ENCODE measurements at regions of chr6 and their contacts with region 1.

Region 1: DNA sequence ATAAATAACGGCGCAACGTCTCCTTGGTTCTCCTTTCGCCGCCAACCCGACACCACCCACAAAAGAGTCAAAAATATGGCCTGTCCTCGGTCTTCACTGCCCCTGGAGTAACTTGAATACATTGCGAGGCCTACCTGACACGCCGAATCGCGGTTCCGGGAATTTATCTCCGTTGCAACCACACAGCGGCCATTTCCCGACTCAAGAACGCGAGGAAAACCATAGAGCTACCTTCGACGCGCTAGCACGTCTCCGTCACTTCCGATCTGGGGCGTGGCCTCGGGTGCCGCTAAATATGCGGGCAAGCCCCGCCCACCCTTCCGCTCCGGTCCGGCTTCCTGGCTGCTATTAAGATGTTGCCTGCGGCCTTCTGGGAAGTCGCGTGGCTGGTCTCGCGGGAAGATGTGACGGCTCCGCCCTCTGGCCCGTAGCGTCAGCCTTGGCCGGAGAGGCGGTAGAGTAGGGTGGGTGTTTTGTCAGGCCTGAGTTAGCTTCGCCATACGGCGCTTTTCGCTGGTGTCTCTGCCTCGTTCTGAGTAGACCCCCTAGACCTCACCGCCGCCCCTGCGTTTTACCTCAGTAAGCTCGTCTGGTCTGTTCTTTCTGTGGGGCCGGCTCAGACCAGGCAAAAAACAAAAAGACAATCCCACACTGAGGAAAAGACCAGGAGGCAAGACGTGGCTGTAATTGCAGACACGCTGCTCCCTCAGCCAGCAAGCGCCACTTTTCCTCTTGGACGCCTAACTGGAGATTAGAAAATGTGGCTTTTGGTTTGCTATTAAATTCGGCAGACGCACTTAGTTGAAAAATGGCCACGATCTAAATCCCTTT is at the start of gene BCLAF1:
- DNase-seq: peak; percentile 99 to 100 (median 100)
- H3K4me3 ChIP-seq: peak within 1 kb of the TSS; percentile 92 to 94
- H3K4me3 Mint-ChIP-seq: peak within 1 kb of the TSS; percentile 93 to 100 (median 100)
- H3K27ac ChIP-seq: peak within 1 kb of the TSS; percentile 100
- H3K27ac Mint-ChIP-seq: peak within 1 kb of the TSS; percentile 99 to 100 (median 100)
- H3K4me1 ChIP-seq: peaks cover 56% of the 10 kb centered on the region
- H3K4me1 Mint-ChIP-seq: peaks cover 22 to 72% (median 47%) of the 10 kb centered on the region in 4 donors
- H3K27me3 ChIP-seq: no peaks in the 10 kb centered on the region
- H3K27me3 Mint-ChIP-seq: peaks cover 5% of the 10 kb centered on the region in 2 donors
- total RNA-seq, gene BCLAF1: 233 to 242 TPM

Region 2: DNA sequence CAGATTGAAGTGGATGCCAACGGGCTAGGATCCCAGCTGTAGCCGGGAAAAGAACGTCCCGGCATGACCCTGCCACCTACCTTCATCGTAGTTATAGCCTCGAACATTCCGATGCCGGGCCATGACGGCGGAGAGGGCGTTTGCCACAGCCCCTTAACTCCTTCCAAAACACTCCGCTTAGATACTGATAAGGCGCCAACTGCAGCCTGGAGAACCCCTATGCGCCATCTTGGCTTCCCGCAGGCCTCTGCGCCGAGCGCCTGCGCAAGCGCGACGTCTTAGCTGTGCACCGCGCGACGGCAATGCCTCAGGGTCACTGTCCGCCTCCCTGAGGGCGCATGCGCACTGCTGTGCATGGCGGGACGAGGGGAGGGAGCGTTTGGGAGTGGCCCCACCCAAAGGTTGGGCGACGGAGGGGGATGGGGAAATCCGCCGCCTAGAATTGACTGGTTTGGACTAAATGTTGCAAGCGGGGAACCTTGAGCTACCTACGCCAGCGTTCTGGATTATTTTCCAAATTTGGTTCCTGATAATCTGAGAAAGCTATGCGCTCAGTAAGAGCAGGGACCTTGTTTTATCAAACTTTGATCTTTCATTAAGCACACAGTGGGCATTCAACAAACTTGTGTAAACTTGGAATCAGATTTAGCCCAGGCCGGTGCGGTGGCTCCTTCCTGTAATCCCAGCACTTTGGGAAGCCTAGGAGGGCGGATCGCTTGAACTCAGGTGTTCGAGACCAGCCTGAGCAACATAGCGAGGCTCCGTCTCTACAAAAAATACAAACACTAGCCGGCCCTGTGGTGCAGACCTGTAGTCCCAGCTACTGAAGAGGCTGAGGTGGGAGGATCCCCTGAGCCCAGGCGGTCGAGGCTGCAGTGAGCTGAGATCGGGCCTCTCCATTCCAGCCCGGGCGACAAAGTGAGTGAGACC is 1235.0 kb before region 1 on chr6 and contains the start of gene HBS1L:
- CTCF ChIA-PET with region 1: interaction called, 4 read pairs
- POLR2A ChIA-PET with region 1: interaction called, 17 read pairs
- intact Hi-C with region 1: no loop called
- DNase-seq: peak; percentile 95 to 97 (median 96)
- H3K4me3 ChIP-seq: peak within 1 kb of the TSS; percentile 54 to 91
- H3K4me3 Mint-ChIP-seq: peak within 1 kb of the TSS; percentile 93 to 99 (median 97)
- H3K27ac ChIP-seq: peak within 1 kb of the TSS; percentile 91
- H3K27ac Mint-ChIP-seq: peak within 1 kb of the TSS; percentile 96 to 99 (median 99)
- H3K4me1 ChIP-seq: peaks cover 37% of the 10 kb centered on the region
- H3K4me1 Mint-ChIP-seq: peaks cover 27 to 44% (median 37%) of the 10 kb centered on the region in 4 donors
- H3K27me3 ChIP-seq: no peaks in the 10 kb centered on the region
- H3K27me3 Mint-ChIP-seq: no peaks in the 10 kb centered on the region
- total RNA-seq, gene HBS1L: 63.8 to 69.9 TPM

Region 3: GRCh38 chr6:135880066-135880972 is 409.5 kb before region 1 on chr6:
- CTCF ChIA-PET with region 1: no interaction called
- POLR2A ChIA-PET with region 1: interaction called, 19 read pairs
- intact Hi-C with region 1: loop called (anchors 2 kb)
- DNase-seq: peak; percentile 66 to 77 (median 71)
- H3K4me3 ChIP-seq: peak overlapping the region; percentile 34 to 40
- H3K4me3 Mint-ChIP-seq: peak overlapping the region; percentile 77 to 96 (median 85)
- H3K27ac ChIP-seq: peak overlapping the region; percentile 65
- H3K27ac Mint-ChIP-seq: peak overlapping the region; percentile 83 to 98 (median 97)
- H3K4me1 ChIP-seq: peaks cover 35% of the 10 kb centered on the region
- H3K4me1 Mint-ChIP-seq: peaks cover 22 to 46% (median 33%) of the 10 kb centered on the region in 4 donors
- H3K27me3 ChIP-seq: no peaks in the 10 kb centered on the region
- H3K27me3 Mint-ChIP-seq: no peaks in the 10 kb centered on the region

Region 4: DNA sequence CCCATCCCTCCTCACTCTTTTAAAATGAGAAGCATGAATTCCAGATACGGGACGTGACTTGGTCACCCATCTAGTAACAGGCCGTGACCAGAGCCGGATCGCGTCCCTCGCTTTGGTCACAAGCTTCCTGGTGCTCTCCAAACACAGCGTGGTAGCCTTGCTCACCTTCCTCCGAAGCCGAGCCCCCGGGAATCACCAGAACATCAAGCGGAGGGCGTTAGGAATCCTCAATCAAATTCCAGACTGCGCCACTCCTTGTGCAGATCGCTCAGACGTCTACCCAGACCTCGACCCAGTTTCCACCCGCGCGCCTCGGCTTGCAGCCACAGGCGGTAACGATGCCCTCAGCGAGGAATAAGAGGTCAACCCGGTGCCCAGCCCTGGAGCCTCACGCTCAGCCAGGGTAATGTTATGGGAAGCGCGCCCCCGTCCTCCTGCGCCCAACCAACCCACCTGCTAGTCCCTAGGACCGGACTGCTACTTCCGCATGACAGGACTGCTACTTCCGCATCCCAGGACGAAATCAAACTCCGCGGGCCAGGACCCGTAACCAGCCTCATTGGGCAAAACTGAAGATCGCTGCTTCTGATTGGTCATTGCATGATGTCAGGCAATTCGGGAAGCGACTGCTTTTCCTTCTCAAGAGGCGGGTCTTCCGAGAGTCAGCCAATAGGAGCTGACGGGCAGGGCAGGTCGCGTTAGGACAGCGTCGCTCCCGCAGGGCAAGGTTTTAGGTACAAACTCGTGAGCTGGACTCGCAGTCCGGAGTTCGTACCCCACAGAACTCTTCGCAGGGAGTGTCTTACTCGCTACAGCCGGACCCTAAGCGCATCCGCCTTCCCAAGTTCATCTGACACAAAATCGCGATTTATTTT is 39.7 kb before region 1 on chr6 and contains the start of gene MTFR2:
- CTCF ChIA-PET with region 1: interaction called, 17 read pairs
- POLR2A ChIA-PET with region 1: interaction called, 198 read pairs
- intact Hi-C with region 1: loop called (anchors 1 kb)
- DNase-seq: peak; percentile 94 to 98 (median 96)
- H3K4me3 ChIP-seq: peak within 1 kb of the TSS; percentile 82 to 83
- H3K4me3 Mint-ChIP-seq: peak within 1 kb of the TSS; percentile 91 to 99 (median 96)
- H3K27ac ChIP-seq: peak within 1 kb of the TSS; percentile 57
- H3K27ac Mint-ChIP-seq: peak within 1 kb of the TSS; percentile 74 to 96 (median 88)
- H3K4me1 ChIP-seq: peaks cover 21% of the 10 kb centered on the region
- H3K4me1 Mint-ChIP-seq: peaks cover 24 to 43% (median 34%) of the 10 kb centered on the region in 4 donors
- H3K27me3 ChIP-seq: no peaks in the 10 kb centered on the region
- H3K27me3 Mint-ChIP-seq: no peaks in the 10 kb centered on the region
- total RNA-seq, gene MTFR2: 1.2 TPM

Region 5: DNA sequence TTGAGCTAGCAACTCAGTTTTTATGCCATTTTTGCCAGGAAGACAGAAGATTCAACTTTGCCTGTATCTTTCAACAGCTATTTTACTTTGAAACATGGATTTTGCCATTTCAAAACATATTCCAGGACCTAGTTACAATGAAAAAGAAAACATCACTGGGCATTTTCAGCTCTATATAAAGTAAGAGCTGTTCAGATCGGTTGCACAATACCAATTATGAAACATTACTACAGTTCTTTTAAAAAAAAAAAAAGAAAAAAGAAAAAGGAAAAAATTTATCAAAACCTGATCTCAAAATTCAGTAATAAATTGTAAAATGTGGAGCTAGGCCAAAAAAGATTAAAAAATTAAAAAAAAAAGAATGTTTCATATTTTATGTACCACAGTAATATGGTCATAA is 15.7 kb before region 1 on chr6:
- CTCF ChIA-PET with region 1: interaction called, 8 read pairs
- POLR2A ChIA-PET with region 1: interaction called, 15 read pairs
- intact Hi-C with region 1: loop called (anchors 2 kb)
- DNase-seq: no peak
- H3K4me3 ChIP-seq: no peak overlapping the region
- H3K4me3 Mint-ChIP-seq: no peak overlapping the region
- H3K27ac ChIP-seq: no peak overlapping the region
- H3K27ac Mint-ChIP-seq: peak overlapping the region in 1 of 7 donors; percentile 41
- H3K4me1 ChIP-seq: peaks cover 12% of the 10 kb centered on the region
- H3K4me1 Mint-ChIP-seq: peaks cover 18 to 48% (median 35%) of the 10 kb centered on the region in 4 donors
- H3K27me3 ChIP-seq: no peaks in the 10 kb centered on the region
- H3K27me3 Mint-ChIP-seq: no peaks in the 10 kb centered on the region

Region 6: DNA sequence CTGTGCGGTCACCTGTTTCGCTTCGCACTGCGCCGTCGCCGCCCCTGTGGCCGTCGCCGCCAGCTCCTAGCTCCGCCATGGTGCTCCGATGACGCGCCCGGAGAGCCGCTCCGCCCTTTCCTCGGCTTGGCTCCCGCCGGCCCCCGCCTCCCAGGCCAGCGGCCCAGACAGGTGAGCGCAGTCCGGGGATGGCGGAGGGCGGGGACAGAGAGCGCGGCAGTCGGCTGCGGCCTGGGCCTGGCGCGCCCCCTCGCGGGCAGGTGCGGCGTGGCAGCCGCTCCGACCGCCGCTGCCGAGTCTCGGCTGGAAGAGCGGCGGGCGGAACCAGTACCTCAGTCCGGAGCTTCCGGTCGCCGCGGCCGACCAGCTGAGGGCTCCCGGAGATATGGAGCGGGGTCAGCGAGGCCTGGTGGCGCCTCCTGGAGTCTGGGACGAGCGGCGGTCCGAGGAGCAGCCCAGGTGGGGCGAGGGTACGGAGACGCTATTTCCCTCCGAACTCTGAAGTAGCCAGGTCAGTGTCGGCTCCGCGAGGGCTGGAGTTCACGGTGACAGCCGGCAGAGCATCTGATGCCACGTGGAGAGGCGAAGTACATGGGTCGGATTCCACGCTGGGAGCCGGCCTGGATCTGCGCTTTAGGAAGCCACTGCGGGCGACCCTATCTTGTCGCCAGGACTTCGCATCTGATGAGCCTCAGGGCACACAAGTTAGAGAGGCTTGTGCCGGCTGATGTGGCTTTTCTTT is 260.7 kb after region 1 on chr6 and contains the start of gene MAP7:
- CTCF ChIA-PET with region 1: no interaction called
- POLR2A ChIA-PET with region 1: interaction called, 10 read pairs
- intact Hi-C with region 1: no loop called
- DNase-seq: peak; percentile 56 to 75 (median 68)
- H3K4me3 ChIP-seq: peak within 1 kb of the TSS in 1 of 2 donors; percentile 54
- H3K4me3 Mint-ChIP-seq: peak within 1 kb of the TSS; percentile 65 to 81 (median 76)
- H3K27ac ChIP-seq: no peak within 1 kb of the TSS
- H3K27ac Mint-ChIP-seq: peak within 1 kb of the TSS in 6 of 7 donors; percentile 36 to 73 (median 52)
- H3K4me1 ChIP-seq: peaks cover 13% of the 10 kb centered on the region
- H3K4me1 Mint-ChIP-seq: peaks cover 1 to 14% (median 9%) of the 10 kb centered on the region in 4 donors
- H3K27me3 ChIP-seq: peaks cover 14% of the 10 kb centered on the region
- H3K27me3 Mint-ChIP-seq: peaks cover 16 to 21% of the 10 kb centered on the region in 2 donors
- total RNA-seq, gene MAP7: 0.55 to 0.69 TPM

Measured in CD4-positive, alpha-beta memory T cell (primary cell).